A673 (cell line): ENCODE measurements at regions of chr6 and their contacts with region 1.

Region 1: DNA sequence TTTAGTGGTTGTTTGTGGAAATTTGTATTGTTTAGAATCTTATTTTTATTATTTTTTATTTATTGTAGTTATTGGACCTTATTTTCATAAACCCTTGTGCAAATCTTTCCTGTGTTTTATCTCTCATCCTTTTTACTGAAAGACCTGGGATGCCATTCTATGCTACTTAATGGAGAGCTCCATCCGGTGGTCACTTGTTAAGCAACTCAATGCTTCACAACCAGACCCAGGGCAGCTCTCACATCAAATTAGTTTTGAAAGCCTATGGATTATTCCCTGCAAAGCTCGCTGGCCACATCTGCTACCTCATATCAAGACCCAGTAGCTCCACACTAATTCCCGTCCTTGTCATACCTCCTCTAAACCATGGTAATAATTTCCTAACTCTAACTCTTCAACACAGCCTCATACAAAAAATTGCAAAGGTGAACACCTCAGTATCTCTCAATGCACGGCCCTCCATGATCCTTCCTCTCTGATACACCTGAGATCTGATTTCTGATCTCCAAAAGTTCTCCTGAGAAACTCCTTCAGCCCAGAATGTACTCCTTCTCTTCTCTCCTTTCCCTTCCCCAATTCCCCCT is 296.6 kb upstream of the MANEA start:
- DNase-seq: peak; percentile 60
- H3K4me3 ChIP-seq: no peak overlapping the region
- H3K27ac ChIP-seq: no peak overlapping the region
- H3K4me1 ChIP-seq: no peaks in the 10 kb centered on the region
- H3K27me3 ChIP-seq: no peaks in the 10 kb centered on the region
- CTCF ChIP-seq: peak; percentile 63

Region 2: GRCh38 chr6:95227351-95227750 is 53.4 kb before region 1 on chr6:
- CTCF ChIA-PET with region 1: interaction called, 19 read pairs
- POLR2A ChIA-PET with region 1: no interaction called
- intact Hi-C with region 1: no loop called
- DNase-seq: peak; percentile 23
- H3K4me3 ChIP-seq: no peak overlapping the region
- H3K27ac ChIP-seq: no peak overlapping the region
- H3K4me1 ChIP-seq: peaks cover 37% of the 10 kb centered on the region
- H3K27me3 ChIP-seq: no peaks in the 10 kb centered on the region
- CTCF ChIP-seq: no peak

Region 3: GRCh38 chr6:95698271-95698670 is 417.5 kb after region 1 on chr6:
- CTCF ChIA-PET with region 1: no interaction called
- POLR2A ChIA-PET with region 1: no interaction called
- intact Hi-C with region 1: no loop called
- DNase-seq: no peak
- H3K4me3 ChIP-seq: no peak overlapping the region
- H3K27ac ChIP-seq: no peak overlapping the region
- H3K4me1 ChIP-seq: no peaks in the 10 kb centered on the region
- H3K27me3 ChIP-seq: no peaks in the 10 kb centered on the region
- CTCF ChIP-seq: no peak

Region 4: GRCh38 chr6:95819939-95820338 is 539.2 kb after region 1 on chr6:
- CTCF ChIA-PET with region 1: no interaction called
- POLR2A ChIA-PET with region 1: no interaction called
- intact Hi-C with region 1: no loop called
- DNase-seq: peak; percentile 26
- H3K4me3 ChIP-seq: no peak overlapping the region
- H3K27ac ChIP-seq: no peak overlapping the region
- H3K4me1 ChIP-seq: no peaks in the 10 kb centered on the region
- H3K27me3 ChIP-seq: no peaks in the 10 kb centered on the region
- CTCF ChIP-seq: peak; percentile 49